ENCODE measurements at regions of chr16 and their contacts with region 1.

Region 1: GRCh38 chr16:17343028-17343427 is 127.7 kb downstream of the XYLT1 start:
- DNase-seq: peak; percentile 51 to 73 (median 60)
- H3K4me3 ChIP-seq: no peak overlapping the region
- H3K4me3 Mint-ChIP-seq: peak overlapping the region in 7 of 8 donors; percentile 30 to 84 (median 56)
- H3K27ac ChIP-seq: no peak overlapping the region
- H3K27ac Mint-ChIP-seq: peak overlapping the region; percentile 13 to 93 (median 91)
- H3K4me1 ChIP-seq: peaks cover 67% of the 10 kb centered on the region
- H3K4me1 Mint-ChIP-seq: peaks cover 54 to 84% (median 69%) of the 10 kb centered on the region in 4 donors
- H3K27me3 ChIP-seq: no peaks in the 10 kb centered on the region
- H3K27me3 Mint-ChIP-seq: no peaks in the 10 kb centered on the region

Region 2: GRCh38 chr16:17258848-17259713 is 83.9 kb before region 1 on chr16:
- CTCF ChIA-PET with region 1: no interaction called
- POLR2A ChIA-PET with region 1: no interaction called
- intact Hi-C with region 1: no loop called
- DNase-seq: no peak
- H3K4me3 ChIP-seq: no peak overlapping the region
- H3K4me3 Mint-ChIP-seq: no peak overlapping the region
- H3K27ac ChIP-seq: no peak overlapping the region
- H3K27ac Mint-ChIP-seq: peak overlapping the region in 4 of 7 donors; percentile 9 to 58 (median 55)
- H3K4me1 ChIP-seq: peaks cover 16% of the 10 kb centered on the region
- H3K4me1 Mint-ChIP-seq: peaks cover 26 to 32% (median 27%) of the 10 kb centered on the region in 4 donors
- H3K27me3 ChIP-seq: no peaks in the 10 kb centered on the region
- H3K27me3 Mint-ChIP-seq: no peaks in the 10 kb centered on the region

Region 3: GRCh38 chr16:17293813-17294558 is 49.0 kb before region 1 on chr16:
- CTCF ChIA-PET with region 1: no interaction called
- POLR2A ChIA-PET with region 1: no interaction called
- intact Hi-C with region 1: no loop called
- DNase-seq: no peak
- H3K4me3 ChIP-seq: no peak overlapping the region
- H3K4me3 Mint-ChIP-seq: no peak overlapping the region
- H3K27ac ChIP-seq: no peak overlapping the region
- H3K27ac Mint-ChIP-seq: no peak overlapping the region
- H3K4me1 ChIP-seq: no peaks in the 10 kb centered on the region
- H3K4me1 Mint-ChIP-seq: peaks cover 6 to 10% (median 8%) of the 10 kb centered on the region in 4 donors
- H3K27me3 ChIP-seq: no peaks in the 10 kb centered on the region
- H3K27me3 Mint-ChIP-seq: no peaks in the 10 kb centered on the region

Region 4: GRCh38 chr16:17364319-17365210 is 21.5 kb after region 1 on chr16:
- CTCF ChIA-PET with region 1: interaction called, 14 read pairs
- POLR2A ChIA-PET with region 1: interaction called, 23 read pairs
- intact Hi-C with region 1: no loop called
- DNase-seq: peak; percentile 85 to 91 (median 87)
- H3K4me3 ChIP-seq: peak overlapping the region; percentile 10 to 18
- H3K4me3 Mint-ChIP-seq: peak overlapping the region; percentile 52 to 77 (median 68)
- H3K27ac ChIP-seq: peak overlapping the region; percentile 72
- H3K27ac Mint-ChIP-seq: peak overlapping the region; percentile 95 to 100 (median 99)
- H3K4me1 ChIP-seq: peaks cover 100% of the 10 kb centered on the region
- H3K4me1 Mint-ChIP-seq: peaks cover 84 to 100% (median 94%) of the 10 kb centered on the region in 4 donors
- H3K27me3 ChIP-seq: no peaks in the 10 kb centered on the region
- H3K27me3 Mint-ChIP-seq: no peaks in the 10 kb centered on the region

Region 5: GRCh38 chr16:17397499-17397891 is 54.5 kb after region 1 on chr16:
- CTCF ChIA-PET with region 1: interaction called, 3 read pairs
- POLR2A ChIA-PET with region 1: interaction called, 3 read pairs
- intact Hi-C with region 1: loop called (anchors 10 kb)
- DNase-seq: peak; percentile 37 to 68 (median 45)
- H3K4me3 ChIP-seq: no peak overlapping the region
- H3K4me3 Mint-ChIP-seq: peak overlapping the region; percentile 16 to 89 (median 76)
- H3K27ac ChIP-seq: peak overlapping the region; percentile 77
- H3K27ac Mint-ChIP-seq: peak overlapping the region; percentile 97 to 100 (median 99)
- H3K4me1 ChIP-seq: peaks cover 77% of the 10 kb centered on the region
- H3K4me1 Mint-ChIP-seq: peaks cover 45 to 85% (median 68%) of the 10 kb centered on the region in 4 donors
- H3K27me3 ChIP-seq: no peaks in the 10 kb centered on the region
- H3K27me3 Mint-ChIP-seq: no peaks in the 10 kb centered on the region

Measured in CD4-positive, alpha-beta memory T cell (primary cell).